ENCODE measurements at regions of chr2 and their contacts with region 1.

Region 1: GRCh38 chr2:112275306-112275886 is at the start of gene ZC3H6:
- DNase-seq: peak; percentile 100
- H3K4me3 Mint-ChIP-seq: peak within 1 kb of the TSS; percentile 93
- H3K27ac Mint-ChIP-seq: peak within 1 kb of the TSS; percentile 97
- H3K4me1 Mint-ChIP-seq: peaks cover 17% of the 10 kb centered on the region
- H3K27me3 Mint-ChIP-seq: no peaks in the 10 kb centered on the region
- total RNA-seq, gene ZC3H6: 14.4 to 15.0 TPM

Region 2: DNA sequence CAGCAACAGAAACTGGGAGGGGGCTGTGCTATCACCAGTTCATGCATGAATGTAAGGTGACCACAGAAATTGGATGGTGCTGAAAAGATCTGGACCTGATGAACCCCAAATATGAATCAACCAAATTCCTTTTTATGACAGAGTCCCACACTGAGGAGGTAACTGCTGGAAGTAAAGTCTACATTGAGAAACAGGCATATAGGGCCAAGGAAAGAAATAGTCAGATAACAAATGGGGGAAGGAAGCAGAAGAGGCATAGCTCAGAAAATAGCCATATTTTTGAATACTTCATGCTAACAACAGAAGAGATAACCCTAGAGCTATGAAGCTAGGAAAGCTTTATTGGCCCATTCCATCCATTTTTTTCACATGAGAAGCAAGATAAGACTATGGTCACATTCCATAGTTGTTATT is 25.8 kb after region 1 on chr2:
- CTCF ChIA-PET with region 1: no interaction called
- POLR2A ChIA-PET with region 1: no interaction called
- intact Hi-C with region 1: no loop called
- DNase-seq: no peak
- H3K4me3 Mint-ChIP-seq: no peak overlapping the region
- H3K27ac Mint-ChIP-seq: no peak overlapping the region
- H3K4me1 Mint-ChIP-seq: peaks cover 6% of the 10 kb centered on the region
- H3K27me3 Mint-ChIP-seq: no peaks in the 10 kb centered on the region

Region 3: DNA sequence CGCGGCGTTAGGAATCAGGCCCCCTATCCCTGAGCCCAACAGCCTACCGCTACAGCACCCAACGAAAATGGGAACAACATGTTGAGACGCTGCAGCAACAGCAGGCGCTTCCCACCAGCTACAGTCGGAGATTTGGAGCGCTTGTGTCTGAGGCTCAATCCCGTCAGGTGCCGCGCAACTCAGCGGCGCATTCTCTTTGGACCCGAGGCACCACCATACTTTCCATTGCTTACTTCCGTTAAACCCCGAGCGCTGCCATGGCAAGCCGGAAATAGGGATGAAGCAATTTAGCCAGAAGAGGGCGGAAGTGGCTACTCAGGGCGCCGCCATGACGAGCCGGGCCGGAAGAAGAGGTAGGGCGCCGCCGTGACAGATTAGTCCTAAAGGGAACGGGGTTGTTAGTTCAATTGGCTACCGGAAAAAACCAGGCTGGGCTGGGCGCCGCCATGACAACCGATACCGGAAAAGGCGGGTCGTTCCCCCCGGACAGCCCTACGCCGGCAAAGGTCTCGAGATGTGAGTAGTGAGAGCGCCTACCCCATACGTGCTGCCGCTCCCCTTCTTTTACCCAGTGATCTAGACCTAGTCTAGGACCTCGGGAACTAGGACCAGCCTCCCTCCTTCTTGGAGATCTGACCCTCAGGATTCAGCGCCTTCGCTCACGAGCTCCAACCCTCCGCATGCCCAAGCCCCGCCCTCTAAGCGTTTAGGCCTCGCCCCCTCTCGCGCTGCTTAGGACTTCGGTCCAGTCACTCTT is 308.9 kb after region 1 on chr2 and contains the start of gene CHCHD5:
- CTCF ChIA-PET with region 1: no interaction called
- POLR2A ChIA-PET with region 1: no interaction called
- intact Hi-C with region 1: loop called (anchors 5 kb)
- DNase-seq: peak; percentile 97
- H3K4me3 Mint-ChIP-seq: peak within 1 kb of the TSS; percentile 97
- H3K27ac Mint-ChIP-seq: peak within 1 kb of the TSS; percentile 99
- H3K4me1 Mint-ChIP-seq: peaks cover 30% of the 10 kb centered on the region
- H3K27me3 Mint-ChIP-seq: no peaks in the 10 kb centered on the region
- total RNA-seq, gene CHCHD5: 39.3 to 41.4 TPM

Measured in activated CD4-positive, alpha-beta memory T cell treated with anti-CD3 and anti-CD28 coated beads for 36 hours (primary cell).